ENCODE measurements at regions of chr5 and their contacts with region 1.

Region 1: DNA sequence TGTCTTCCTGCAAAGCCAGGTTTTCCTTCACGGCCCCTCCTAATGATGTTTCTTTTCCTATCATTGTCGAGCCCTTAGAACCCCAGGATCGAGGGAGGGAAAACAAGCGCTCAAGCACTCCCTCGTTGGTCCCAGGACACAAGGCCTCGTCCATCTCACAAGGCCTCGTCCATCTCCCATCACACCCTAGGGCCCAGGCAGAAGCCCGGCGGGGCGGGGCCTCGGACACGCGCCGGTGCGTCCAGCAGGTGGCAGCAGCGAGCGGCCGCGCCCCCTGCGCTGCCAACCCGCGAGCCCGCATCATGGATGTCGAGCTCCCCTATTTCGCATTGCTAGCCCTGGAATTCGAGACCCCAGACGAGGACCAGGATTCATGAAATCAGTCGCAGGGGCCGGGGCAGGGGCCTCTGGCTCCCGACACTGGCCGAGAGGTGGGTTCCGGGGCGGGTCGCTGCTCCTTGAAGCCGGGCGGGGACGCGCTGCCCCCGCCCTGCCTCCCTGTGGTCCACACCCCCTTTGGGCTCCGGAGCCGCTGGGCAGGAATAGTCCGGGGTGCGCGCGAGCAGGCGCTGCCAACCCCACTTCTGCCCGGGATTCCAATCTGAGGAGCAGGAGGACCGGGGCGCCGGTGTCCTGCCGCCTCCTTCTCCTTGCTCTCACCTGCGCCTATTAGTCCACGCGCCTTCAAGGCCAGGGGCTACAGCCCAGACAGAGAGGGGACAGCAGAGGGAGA is at the start of gene ABLIM3:
- DNase-seq: peak; percentile 67
- ATAC-seq: peak; percentile 97
- H3K4me3 Mint-ChIP-seq: peak within 1 kb of the TSS; percentile 32
- H3K27ac Mint-ChIP-seq: no peak within 1 kb of the TSS
- H3K4me1 Mint-ChIP-seq: no peaks in the 10 kb centered on the region
- H3K27me3 Mint-ChIP-seq: peaks cover 16% of the 10 kb centered on the region
- CTCF ChIP-seq: peak; percentile 88
- total RNA-seq, gene ABLIM3: not detected

Region 2: DNA sequence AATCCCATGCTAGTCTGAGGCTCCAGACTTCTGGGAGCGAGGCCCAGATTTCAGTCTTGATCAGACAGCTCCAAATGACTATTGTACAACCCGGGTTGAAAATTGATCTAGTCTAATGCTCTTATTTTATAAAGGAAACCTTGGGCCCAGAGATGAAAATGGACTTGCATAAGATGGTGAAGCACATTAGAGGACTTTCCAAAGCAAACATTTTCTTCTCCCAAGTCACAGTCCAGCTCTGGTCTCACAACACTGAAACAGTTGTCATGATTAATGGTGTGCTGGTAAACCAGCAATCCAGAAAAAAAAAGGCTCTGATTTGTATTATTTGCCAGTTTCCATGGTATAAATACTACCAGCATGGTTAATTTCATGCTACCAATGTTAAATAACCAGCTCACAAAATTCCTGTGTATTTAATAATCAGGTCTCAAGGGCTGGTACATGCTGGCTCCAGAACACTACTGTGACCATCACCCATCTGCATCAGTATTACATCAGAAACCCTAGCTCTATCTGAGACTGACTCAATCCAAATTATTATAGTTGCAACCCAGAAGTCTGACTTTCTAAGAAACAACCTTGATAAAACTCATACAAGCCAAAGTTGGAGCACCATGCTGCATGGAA is 32.6 kb before region 1 on chr5:
- CTCF ChIA-PET with region 1: no interaction called
- POLR2A ChIA-PET with region 1: no interaction called
- intact Hi-C with region 1: no loop called
- DNase-seq: no peak
- ATAC-seq: no peak
- H3K4me3 Mint-ChIP-seq: no peak overlapping the region
- H3K27ac Mint-ChIP-seq: no peak overlapping the region
- H3K4me1 Mint-ChIP-seq: no peaks in the 10 kb centered on the region
- H3K27me3 Mint-ChIP-seq: peaks cover 3% of the 10 kb centered on the region
- CTCF ChIP-seq: no peak

Region 3: GRCh38 chr5:149125386-149125891 is 16.0 kb before region 1 on chr5:
- CTCF ChIA-PET with region 1: interaction called, 10 read pairs
- POLR2A ChIA-PET with region 1: no interaction called
- intact Hi-C with region 1: no loop called
- DNase-seq: no peak
- ATAC-seq: no peak
- H3K4me3 Mint-ChIP-seq: no peak overlapping the region
- H3K27ac Mint-ChIP-seq: no peak overlapping the region
- H3K4me1 Mint-ChIP-seq: no peaks in the 10 kb centered on the region
- H3K27me3 Mint-ChIP-seq: peaks cover 5% of the 10 kb centered on the region
- CTCF ChIP-seq: no peak

Region 4: GRCh38 chr5:149153751-149154610 is 12.6 kb after region 1 on chr5:
- CTCF ChIA-PET with region 1: interaction called, 30 read pairs
- POLR2A ChIA-PET with region 1: no interaction called
- intact Hi-C with region 1: no loop called
- DNase-seq: no peak
- ATAC-seq: no peak
- H3K4me3 Mint-ChIP-seq: no peak overlapping the region
- H3K27ac Mint-ChIP-seq: no peak overlapping the region
- H3K4me1 Mint-ChIP-seq: no peaks in the 10 kb centered on the region
- H3K27me3 Mint-ChIP-seq: peaks cover 7% of the 10 kb centered on the region
- CTCF ChIP-seq: no peak

Region 5: GRCh38 chr5:149268928-149269557 is 127.7 kb after region 1 on chr5:
- CTCF ChIA-PET with region 1: interaction called, 39 read pairs
- POLR2A ChIA-PET with region 1: no interaction called
- intact Hi-C with region 1: loop called (anchors 2 kb)
- DNase-seq: no peak
- ATAC-seq: peak; percentile 52
- H3K4me3 Mint-ChIP-seq: no peak overlapping the region
- H3K27ac Mint-ChIP-seq: no peak overlapping the region
- H3K4me1 Mint-ChIP-seq: peaks cover 6% of the 10 kb centered on the region
- H3K27me3 Mint-ChIP-seq: peaks cover 24% of the 10 kb centered on the region
- CTCF ChIP-seq: peak; percentile 97

Measured in activated CD8-positive, alpha-beta T cell treated with anti-CD3 and anti-CD28 coated beads for 36 hours (primary cell).